A549 (cell line): ENCODE measurements at regions of chr11 and their contacts with region 1.

Region 1: GRCh38 chr11:44286268-44286880 is 23.6 kb downstream of the ALX4 start:
- DNase-seq: peak; percentile 70 to 89
- ATAC-seq: peak; percentile 78 to 88; a peak in 4 of 6 replicates
- H3K4me3 ChIP-seq: no peak overlapping the region
- H3K27ac ChIP-seq: peak overlapping the region; percentile 57 to 78; a peak in 5 of 6 replicates
- H3K4me1 ChIP-seq: peaks cover 47% of the 10 kb centered on the region
- CTCF ChIP-seq: peak; percentile 91
- EP300 ChIP-seq: no peak
- POLR2A ChIP-seq: no peak
- RAD21 ChIP-seq: peak; percentile 95 to 96

Region 2: DNA sequence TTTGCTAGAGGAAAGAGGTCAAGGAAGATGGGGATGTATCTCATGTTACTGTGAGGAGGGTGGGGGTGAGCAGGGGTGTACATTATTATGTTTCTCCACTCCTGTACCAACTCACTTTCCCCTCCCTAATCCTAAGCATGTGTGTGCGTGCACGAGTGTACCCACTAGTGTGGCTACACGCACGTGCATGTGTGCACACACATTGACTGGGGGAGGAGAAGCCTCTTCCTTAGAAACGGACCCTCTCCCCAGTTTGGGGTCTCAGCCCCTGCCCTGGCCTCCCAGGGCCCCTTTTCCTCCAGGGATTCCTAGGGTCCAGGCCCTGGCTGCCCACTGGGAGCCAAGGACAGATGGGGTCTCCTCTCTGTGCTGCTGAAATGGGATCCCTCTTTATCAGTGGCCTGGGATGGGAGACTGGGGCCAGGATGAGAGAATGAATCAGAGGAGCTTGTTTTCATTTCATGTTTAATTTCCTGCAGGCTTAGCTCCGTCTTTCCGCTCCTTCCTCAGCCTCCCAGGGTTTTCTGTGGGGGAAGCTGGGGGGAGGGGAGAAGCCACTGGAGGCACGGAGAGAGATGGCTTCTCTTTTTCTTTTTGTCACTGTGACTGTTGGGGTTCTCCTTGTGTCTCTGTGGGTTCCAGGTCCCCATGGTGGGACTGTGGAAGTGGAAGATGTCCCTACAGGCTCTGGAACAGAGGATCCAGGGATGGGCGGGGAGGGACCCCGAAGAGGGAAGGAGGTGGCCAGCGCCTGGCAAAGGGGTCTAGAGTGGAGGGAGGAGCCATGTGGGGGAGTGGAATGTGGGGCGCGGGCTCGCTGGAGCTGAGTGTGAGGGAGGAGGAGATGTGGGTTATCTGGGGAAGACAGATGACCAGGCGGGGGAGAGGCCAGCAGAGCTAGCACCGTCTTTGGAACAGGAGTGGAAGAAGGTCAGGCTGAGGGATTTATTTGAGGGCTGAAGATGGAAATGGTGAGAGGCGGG is 16.7 kb before region 1 on chr11:
- CTCF ChIA-PET with region 1: interaction called, 38 read pairs
- POLR2A ChIA-PET with region 1: no interaction called
- DNase-seq: no peak
- ATAC-seq: no peak
- H3K4me3 ChIP-seq: no peak overlapping the region
- H3K27ac ChIP-seq: no peak overlapping the region
- H3K4me1 ChIP-seq: no peaks in the 10 kb centered on the region
- CTCF ChIP-seq: no peak
- EP300 ChIP-seq: no peak
- POLR2A ChIP-seq: no peak
- RAD21 ChIP-seq: no peak

Region 3: DNA sequence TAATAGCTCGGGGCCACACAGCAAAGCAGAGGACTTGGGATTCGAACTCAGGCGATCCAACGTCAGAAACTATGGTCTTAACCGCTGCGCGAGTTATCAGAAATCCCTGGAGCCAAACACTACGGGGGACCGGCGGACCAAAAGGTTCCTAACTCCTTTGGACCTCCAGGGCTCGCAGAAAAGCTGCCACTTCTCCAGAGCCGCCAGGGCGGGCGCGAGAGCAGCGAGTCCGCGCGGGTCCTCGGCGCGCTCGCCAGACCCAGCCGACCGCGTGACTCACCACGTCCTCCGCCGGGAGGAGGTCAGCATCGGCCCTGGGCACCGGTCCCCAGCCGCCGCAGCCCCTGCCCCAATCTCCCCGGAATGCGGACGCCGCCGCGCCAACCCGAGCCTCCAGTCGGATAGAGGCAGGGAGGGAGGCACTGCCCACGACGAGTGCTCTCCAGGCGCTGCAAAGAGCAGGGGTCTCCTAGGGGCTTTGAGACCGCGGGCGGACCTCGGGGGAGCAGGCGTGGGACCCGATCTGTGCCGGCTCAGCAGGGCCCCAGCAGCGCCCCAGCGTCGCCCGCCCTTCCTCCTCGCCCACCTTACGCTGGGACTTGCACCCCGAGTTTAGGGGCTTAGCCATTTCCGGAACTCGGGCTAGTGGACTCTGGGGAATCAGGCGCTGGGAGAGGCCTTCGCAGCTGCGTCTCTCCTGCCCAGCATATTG is 29.7 kb after region 1 on chr11:
- CTCF ChIA-PET with region 1: interaction called, 18 read pairs
- POLR2A ChIA-PET with region 1: interaction called, 3 read pairs
- DNase-seq: peak; percentile 44 to 69
- ATAC-seq: peak; percentile 81 to 84
- H3K4me3 ChIP-seq: peak overlapping the region; percentile 54
- H3K27ac ChIP-seq: peak overlapping the region; percentile 77 to 94
- H3K4me1 ChIP-seq: peaks cover 16% of the 10 kb centered on the region; the same call in 2 of the 3 replicates
- CTCF ChIP-seq: no peak
- EP300 ChIP-seq: no peak
- POLR2A ChIP-seq: no peak
- RAD21 ChIP-seq: peak in 1 of 2 experiments; percentile 19; a peak in 1 of 5 replicates

Region 4: DNA sequence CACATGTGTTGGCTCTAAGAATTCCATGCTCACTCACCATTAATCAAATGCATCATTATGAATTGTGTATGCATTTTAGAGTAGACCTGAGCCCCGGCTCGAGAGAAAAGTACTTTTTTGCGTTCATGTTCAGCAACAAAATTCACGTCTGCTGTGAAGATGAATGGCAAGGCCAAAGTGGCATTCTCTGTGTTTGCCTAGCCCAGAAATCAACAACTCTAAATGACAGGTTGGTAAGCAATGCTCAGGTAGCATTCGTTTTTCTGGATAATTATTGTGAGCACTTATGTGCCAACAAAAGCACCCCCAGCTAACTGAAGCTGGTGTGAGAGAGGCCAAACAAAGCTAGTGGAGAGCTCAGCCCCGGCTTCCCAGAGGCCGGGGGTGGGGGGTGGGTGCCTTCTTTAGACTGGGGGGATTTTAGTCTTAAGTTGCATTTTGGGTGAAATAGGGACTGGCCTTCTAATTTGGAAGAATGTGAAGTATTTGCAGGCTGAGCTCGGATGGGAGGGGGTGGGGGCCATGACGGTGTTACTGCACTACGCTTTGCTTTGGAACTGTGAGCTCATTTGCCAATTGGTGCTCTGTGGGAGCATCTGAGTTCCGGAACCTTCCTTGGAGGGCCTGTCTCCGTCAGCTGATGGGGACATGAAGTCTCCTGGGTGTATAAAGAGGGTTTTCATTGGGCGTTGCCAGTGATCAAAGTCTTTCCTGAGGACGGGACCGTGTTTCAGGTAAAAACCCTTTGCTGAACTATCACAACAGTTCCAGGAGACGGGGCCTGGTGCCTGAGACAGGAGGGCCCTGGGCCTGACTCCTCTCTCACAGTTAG is 52.5 kb after region 1 on chr11:
- CTCF ChIA-PET with region 1: interaction called, 10 read pairs
- POLR2A ChIA-PET with region 1: no interaction called
- DNase-seq: no peak
- ATAC-seq: no peak
- H3K4me3 ChIP-seq: no peak overlapping the region
- H3K27ac ChIP-seq: no peak overlapping the region
- H3K4me1 ChIP-seq: peaks cover 2% of the 10 kb centered on the region; the same call in 1 of the 3 replicates
- CTCF ChIP-seq: no peak
- EP300 ChIP-seq: no peak
- POLR2A ChIP-seq: no peak
- RAD21 ChIP-seq: no peak

Region 5: DNA sequence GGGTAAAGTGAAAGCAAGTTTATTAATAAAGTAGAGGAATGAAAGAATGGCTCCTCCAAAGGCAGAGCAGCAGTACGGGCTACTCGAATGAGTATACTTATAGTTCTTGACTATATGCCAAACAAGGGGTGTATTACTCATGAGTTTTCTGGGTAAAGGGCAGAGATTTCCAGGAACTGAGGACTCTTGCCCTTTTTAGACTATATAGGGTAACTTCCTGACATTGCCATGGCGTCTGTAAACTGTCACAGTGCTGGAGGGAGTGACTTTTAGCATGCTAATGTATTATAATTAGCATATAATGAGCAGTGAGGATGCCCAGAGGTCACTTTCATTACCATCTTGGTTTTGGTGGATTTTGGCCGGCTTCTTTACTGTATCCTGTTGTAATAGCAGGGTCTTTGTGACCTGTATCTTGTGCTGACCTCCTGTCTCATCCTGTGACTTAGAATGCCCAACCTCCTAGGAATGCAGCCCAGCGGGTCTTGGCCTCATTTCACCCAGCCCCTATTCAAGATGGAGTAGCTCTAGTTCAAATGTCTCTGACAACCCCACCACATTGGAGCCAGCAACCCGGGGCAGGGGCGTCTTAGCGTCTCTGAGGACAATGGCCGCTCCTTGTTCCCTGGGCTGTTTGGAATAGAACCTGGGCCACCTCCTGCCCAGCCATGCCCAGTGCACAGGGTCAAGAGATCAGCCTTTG is 244.2 kb after region 1 on chr11:
- CTCF ChIA-PET with region 1: interaction called, 152 read pairs
- POLR2A ChIA-PET with region 1: no interaction called
- DNase-seq: no peak
- ATAC-seq: peak in 1 of 2 experiments; percentile 61; a peak in 3 of 6 replicates
- H3K4me3 ChIP-seq: no peak overlapping the region
- H3K27ac ChIP-seq: peak overlapping the region in 1 of 2 experiments; percentile 43; a peak in 2 of 6 replicates
- H3K4me1 ChIP-seq: peaks cover 17% of the 10 kb centered on the region; the same call in 2 of the 3 replicates
- CTCF ChIP-seq: no peak
- EP300 ChIP-seq: no peak
- POLR2A ChIP-seq: no peak
- RAD21 ChIP-seq: no peak